Activated CD8-positive, alpha-beta T cell treated with anti-CD3 and anti-CD28 coated beads for 36 hours (primary cell): ENCODE measurements at regions of chr11 and their contacts with region 1.

Region 1: DNA sequence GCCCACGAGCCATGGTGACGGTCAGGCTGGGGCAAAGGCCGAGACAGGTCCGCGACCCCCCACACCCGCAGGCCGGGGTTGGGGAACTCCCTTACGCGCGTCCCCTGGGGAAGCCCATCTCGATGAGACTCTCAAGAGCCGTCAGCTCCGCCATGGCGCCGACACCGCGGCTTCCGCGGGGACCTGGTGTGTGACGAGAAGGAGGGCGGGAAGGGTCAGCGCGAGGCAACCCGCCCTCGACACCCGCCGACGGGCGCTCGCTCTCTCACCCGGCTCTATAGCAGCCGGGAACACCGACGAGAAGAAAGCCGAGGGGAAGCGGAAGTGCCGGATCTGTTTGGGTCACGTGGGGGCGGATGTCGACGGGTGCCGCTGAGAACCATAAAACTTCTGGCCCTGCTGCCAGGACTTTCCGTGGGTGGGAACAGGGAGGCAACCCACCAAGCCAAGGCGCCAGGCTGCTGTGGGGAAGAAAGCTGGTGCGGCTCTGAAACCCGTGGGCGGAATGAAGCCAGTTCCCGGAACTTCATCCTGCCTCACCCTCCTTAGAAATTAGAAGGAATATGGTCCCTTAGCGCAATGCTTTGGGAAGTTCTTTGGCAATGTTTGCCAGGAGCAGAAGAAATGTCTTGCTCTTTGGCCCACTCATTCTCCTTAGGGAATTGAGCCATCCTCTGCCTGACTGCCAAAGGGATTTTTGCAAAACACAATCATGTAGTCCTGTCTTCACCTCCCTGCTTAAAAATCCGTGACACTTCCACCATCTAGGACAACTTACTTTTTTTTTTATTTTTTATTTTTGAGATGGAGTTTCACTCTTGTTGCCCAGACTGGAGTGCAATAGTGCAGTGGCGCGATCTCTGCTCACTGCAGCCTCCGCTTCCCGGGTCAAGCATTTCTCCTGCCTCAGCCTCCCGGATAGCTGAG is at the start of gene UBXN1:
- DNase-seq: peak; percentile 94
- ATAC-seq: peak; percentile 76
- H3K4me3 Mint-ChIP-seq: peak within 1 kb of the TSS; percentile 86
- H3K27ac Mint-ChIP-seq: peak within 1 kb of the TSS; percentile 93
- H3K4me1 Mint-ChIP-seq: peaks cover 29% of the 10 kb centered on the region
- H3K27me3 Mint-ChIP-seq: no peaks in the 10 kb centered on the region
- CTCF ChIP-seq: no peak
- total RNA-seq, gene UBXN1: 104 to 120 TPM

Region 2: GRCh38 chr11:62694455-62695167 is 15.6 kb after region 1 on chr11:
- CTCF ChIA-PET with region 1: interaction called, 79 read pairs
- POLR2A ChIA-PET with region 1: interaction called, 5 read pairs
- intact Hi-C with region 1: no loop called
- DNase-seq: peak; percentile 87
- ATAC-seq: peak; percentile 84
- H3K4me3 Mint-ChIP-seq: no peak overlapping the region
- H3K27ac Mint-ChIP-seq: no peak overlapping the region
- H3K4me1 Mint-ChIP-seq: peaks cover 7% of the 10 kb centered on the region
- H3K27me3 Mint-ChIP-seq: no peaks in the 10 kb centered on the region
- CTCF ChIP-seq: peak; percentile 92

Region 3: DNA sequence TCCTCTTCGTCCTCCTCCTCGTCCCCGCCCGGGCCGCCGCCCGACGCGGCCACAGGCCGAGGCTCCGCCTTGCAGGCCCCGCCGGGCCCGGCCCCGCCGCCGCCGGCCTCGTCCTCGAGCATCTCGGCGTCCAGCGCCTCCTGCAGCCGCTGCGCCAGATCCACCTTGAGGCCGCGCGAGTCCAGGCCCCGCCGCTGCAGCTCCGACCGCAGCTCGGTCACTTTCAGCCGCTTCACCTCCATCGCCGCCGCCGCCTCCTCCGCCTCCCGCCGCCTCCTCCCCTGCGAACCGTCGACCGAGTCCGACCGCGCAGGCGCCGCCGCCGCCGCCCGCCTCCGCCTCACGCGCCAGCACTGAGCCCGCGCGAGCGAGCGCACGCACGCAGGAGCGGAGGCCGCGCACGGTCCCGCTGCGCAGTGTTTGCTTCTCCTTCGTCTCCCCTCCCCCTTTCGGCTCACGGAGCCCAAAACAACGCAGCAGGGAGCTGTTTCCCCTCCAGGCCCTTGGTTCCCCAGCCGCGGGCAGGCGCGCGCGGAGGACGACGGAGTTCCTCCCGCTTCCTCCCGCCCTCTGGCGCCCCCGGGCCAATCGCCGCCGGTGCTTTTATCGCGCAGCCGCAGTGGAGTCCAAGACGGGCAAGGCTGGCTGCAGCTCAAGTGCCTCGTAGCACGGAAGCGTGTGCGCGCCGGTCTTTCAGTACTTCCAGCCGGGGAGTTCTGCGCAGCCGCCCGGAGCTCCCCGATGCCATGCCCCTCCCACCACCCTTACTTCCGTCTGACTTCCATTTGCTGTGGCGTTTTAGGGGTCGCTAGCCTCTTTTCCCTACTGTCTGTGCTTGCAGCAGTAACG is 48.1 kb after region 1 on chr11 and contains the start of gene HNRNPUL2:
- CTCF ChIA-PET with region 1: interaction called, 10 read pairs
- POLR2A ChIA-PET with region 1: interaction called, 5 read pairs
- intact Hi-C with region 1: no loop called
- DNase-seq: peak; percentile 98
- ATAC-seq: peak; percentile 92
- H3K4me3 Mint-ChIP-seq: peak within 1 kb of the TSS; percentile 95
- H3K27ac Mint-ChIP-seq: peak within 1 kb of the TSS; percentile 99
- H3K4me1 Mint-ChIP-seq: peaks cover 43% of the 10 kb centered on the region
- H3K27me3 Mint-ChIP-seq: no peaks in the 10 kb centered on the region
- CTCF ChIP-seq: no peak
- total RNA-seq, gene HNRNPUL2: 54.9 to 58.6 TPM